ENCODE measurements at regions of chr17 and their contacts with region 1.

Region 1: GRCh38 chr17:75749545-75750389 is 15.2 kb downstream of the GALK1 start:
- DNase-seq: peak; percentile 76 to 98 (median 91)

Region 2: DNA sequence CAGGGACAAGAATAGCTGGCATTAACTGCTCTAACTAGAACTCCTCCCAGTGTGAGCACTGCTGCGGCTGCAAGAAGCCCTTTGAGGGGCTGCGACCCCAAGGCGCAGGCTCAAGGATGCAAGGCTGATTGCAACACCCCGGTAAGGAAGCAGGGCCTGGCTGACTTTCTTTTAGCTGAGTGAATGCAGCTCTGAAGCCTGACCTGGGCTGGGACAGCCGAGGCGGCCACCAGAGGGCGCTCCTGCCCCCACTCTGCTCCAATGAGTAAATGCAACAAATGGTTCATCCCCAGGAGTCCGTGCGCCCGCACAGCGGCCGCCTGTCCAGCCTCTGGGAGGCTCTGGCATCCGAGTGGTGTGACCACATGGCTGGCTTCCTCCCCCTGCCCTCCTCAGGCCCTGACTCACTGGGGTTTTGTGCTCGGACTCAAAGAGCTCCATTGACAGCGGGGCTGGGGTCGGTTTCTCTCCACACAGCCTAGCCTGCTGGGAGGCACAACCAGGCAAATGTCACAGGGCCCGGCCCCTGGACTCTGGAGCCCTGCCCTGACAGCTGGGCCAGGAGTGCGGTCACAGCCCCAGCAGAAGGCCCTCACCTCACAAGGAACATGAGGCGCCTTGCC is 116.8 kb before region 1 on chr17 and contains the start of gene SMIM5:
- intact Hi-C with region 1: loop called (anchors 1 kb)
- DNase-seq: peak; percentile 90 to 99 (median 95)

Region 3: GRCh38 chr17:75679706-75680442 is 69.9 kb before region 1 on chr17:
- intact Hi-C with region 1: loop called (anchors 1 kb)
- DNase-seq: peak in 4 of 10 donors; percentile 32 to 78 (median 64)

Measured in posterior cingulate gyrus (tissue), 11 donors.